Dendritic cell treated with granulocyte-macrophage colony-stimulating factor and Interleukin-4, amounts not matched to agents 40 ng/mL and 50 ng/mL, for 4 days (primary cell): ENCODE measurements at regions of chr6 and their contacts with region 1.

Region 1: GRCh38 chr6:41683510-41684310 is 45.4 kb downstream of the MDFI start:
- H3K4me3 Mint-ChIP-seq: peak overlapping the region; percentile 75
- H3K27ac Mint-ChIP-seq: peak overlapping the region; percentile 81
- H3K4me1 Mint-ChIP-seq: peaks cover 22% of the 10 kb centered on the region
- H3K27me3 Mint-ChIP-seq: no peaks in the 10 kb centered on the region

Region 2: DNA sequence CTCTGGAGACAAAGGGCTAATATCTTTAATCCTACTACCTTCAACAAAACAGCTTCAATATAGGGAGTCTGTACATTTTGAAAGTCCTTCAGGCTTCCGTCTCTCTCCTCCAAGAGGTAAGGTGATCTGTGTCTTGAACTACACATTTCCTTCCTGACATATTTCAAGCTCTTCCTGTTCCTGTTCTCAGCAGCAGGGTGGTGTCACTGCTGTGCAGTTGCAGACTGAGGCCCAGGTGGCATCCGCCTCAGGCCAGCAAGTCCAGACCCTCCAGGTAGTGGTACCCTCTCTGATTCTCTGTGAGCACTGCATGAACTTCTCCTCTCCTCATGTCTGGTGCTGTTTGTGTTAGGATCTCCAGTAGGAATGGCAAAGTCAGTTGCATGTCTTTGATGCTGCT is 603.1 kb before region 1 on chr6:
- intact Hi-C with region 1: no loop called
- H3K4me3 Mint-ChIP-seq: no peak overlapping the region
- H3K27ac Mint-ChIP-seq: no peak overlapping the region
- H3K4me1 Mint-ChIP-seq: peaks cover 18% of the 10 kb centered on the region
- H3K27me3 Mint-ChIP-seq: no peaks in the 10 kb centered on the region

Region 3: DNA sequence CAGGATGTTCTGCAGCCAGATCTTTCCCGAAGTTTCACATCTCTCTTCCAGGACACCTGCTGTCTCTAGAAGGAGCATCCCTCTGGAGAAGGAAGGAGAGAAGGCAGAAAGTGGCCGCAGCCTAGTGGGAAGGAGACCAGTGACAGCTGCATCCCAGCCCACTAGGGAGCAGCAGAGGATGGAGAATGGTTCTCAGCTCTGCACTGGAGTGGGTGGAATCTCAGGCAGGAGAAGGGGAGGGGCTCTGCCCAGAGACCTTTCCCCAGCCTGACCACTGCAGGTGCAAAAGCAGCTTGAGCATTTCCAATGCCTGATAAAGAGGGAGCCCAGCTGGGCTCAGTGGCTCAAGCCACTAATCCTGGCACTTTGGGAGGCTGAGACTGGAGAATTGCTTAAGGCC is 316.0 kb before region 1 on chr6:
- intact Hi-C with region 1: loop called (anchors 2 kb)
- H3K4me3 Mint-ChIP-seq: no peak overlapping the region
- H3K27ac Mint-ChIP-seq: no peak overlapping the region
- H3K4me1 Mint-ChIP-seq: peaks cover 23% of the 10 kb centered on the region
- H3K27me3 Mint-ChIP-seq: peaks cover 83% of the 10 kb centered on the region

Region 4: GRCh38 chr6:41424370-41425058 is 259.2 kb before region 1 on chr6:
- intact Hi-C with region 1: loop called (anchors 5 kb)
- H3K4me3 Mint-ChIP-seq: no peak overlapping the region
- H3K27ac Mint-ChIP-seq: no peak overlapping the region
- H3K4me1 Mint-ChIP-seq: peaks cover 10% of the 10 kb centered on the region
- H3K27me3 Mint-ChIP-seq: peaks cover 31% of the 10 kb centered on the region

Region 5: GRCh38 chr6:41488433-41489119 is 195.1 kb before region 1 on chr6:
- intact Hi-C with region 1: no loop called
- H3K4me3 Mint-ChIP-seq: no peak overlapping the region
- H3K27ac Mint-ChIP-seq: no peak overlapping the region
- H3K4me1 Mint-ChIP-seq: peaks cover 11% of the 10 kb centered on the region
- H3K27me3 Mint-ChIP-seq: peaks cover 41% of the 10 kb centered on the region

Region 6: GRCh38 chr6:41548098-41548840 is 135.4 kb before region 1 on chr6:
- intact Hi-C with region 1: no loop called
- H3K4me3 Mint-ChIP-seq: peak overlapping the region; percentile 74
- H3K27ac Mint-ChIP-seq: no peak overlapping the region
- H3K4me1 Mint-ChIP-seq: peaks cover 59% of the 10 kb centered on the region
- H3K27me3 Mint-ChIP-seq: peaks cover 75% of the 10 kb centered on the region

Region 7: GRCh38 chr6:41602864-41603608 is 80.7 kb before region 1 on chr6:
- intact Hi-C with region 1: loop called (anchors 1 kb)
- H3K4me3 Mint-ChIP-seq: no peak overlapping the region
- H3K27ac Mint-ChIP-seq: no peak overlapping the region
- H3K4me1 Mint-ChIP-seq: no peaks in the 10 kb centered on the region
- H3K27me3 Mint-ChIP-seq: peaks cover 5% of the 10 kb centered on the region